Natural killer cell (primary cell): ENCODE measurements at regions of chr1 and their contacts with region 1.

Region 1: GRCh38 chr1:206766251-206766856 is 4.2 kb upstream of the IL19 start:
- DNase-seq: peak; percentile 66 to 88
- ATAC-seq: peak; percentile 71 to 79 (median 79)
- H3K4me3 ChIP-seq: no peak overlapping the region
- H3K4me3 Mint-ChIP-seq: peak overlapping the region; percentile 62
- H3K27ac ChIP-seq: no peak overlapping the region
- H3K27ac Mint-ChIP-seq: peak overlapping the region; percentile 29 to 90
- H3K4me1 ChIP-seq: peaks cover 58% of the 10 kb centered on the region
- H3K4me1 Mint-ChIP-seq: peaks cover 47 to 53% of the 10 kb centered on the region in 2 donors
- H3K27me3 ChIP-seq: peaks cover 6% of the 10 kb centered on the region
- H3K27me3 Mint-ChIP-seq: peaks cover 14% of the 10 kb centered on the region in 2 donors
- CTCF ChIP-seq: no peak

Region 2: GRCh38 chr1:206461602-206462455 is 304.5 kb before region 1 on chr1:
- intact Hi-C with region 1: no loop called
- DNase-seq: peak; percentile 54 to 85
- ATAC-seq: peak; percentile 85 to 97 (median 90)
- H3K4me3 ChIP-seq: no peak overlapping the region
- H3K4me3 Mint-ChIP-seq: no peak overlapping the region
- H3K27ac ChIP-seq: no peak overlapping the region
- H3K27ac Mint-ChIP-seq: peak overlapping the region in 1 of 2 donors; percentile 54
- H3K4me1 ChIP-seq: peaks cover 2% of the 10 kb centered on the region
- H3K4me1 Mint-ChIP-seq: peaks cover 0 to 5% of the 10 kb centered on the region in 2 donors
- H3K27me3 ChIP-seq: no peaks in the 10 kb centered on the region
- H3K27me3 Mint-ChIP-seq: peaks cover 0 to 6% of the 10 kb centered on the region in 2 donors
- CTCF ChIP-seq: peak; percentile 73

Region 3: GRCh38 chr1:206725109-206725963 is 41.0 kb before region 1 on chr1:
- intact Hi-C with region 1: loop called (anchors 5 kb)
- DNase-seq: peak; percentile 55 to 82
- ATAC-seq: peak; percentile 36 to 54 (median 54)
- H3K4me3 ChIP-seq: no peak overlapping the region
- H3K4me3 Mint-ChIP-seq: no peak overlapping the region
- H3K27ac ChIP-seq: no peak overlapping the region
- H3K27ac Mint-ChIP-seq: no peak overlapping the region
- H3K4me1 ChIP-seq: peaks cover 67% of the 10 kb centered on the region
- H3K4me1 Mint-ChIP-seq: peaks cover 63 to 83% of the 10 kb centered on the region in 2 donors
- H3K27me3 ChIP-seq: no peaks in the 10 kb centered on the region
- H3K27me3 Mint-ChIP-seq: no peaks in the 10 kb centered on the region
- CTCF ChIP-seq: peak; percentile 55

Region 4: GRCh38 chr1:206786212-206786886 is 20.0 kb after region 1 on chr1:
- intact Hi-C with region 1: loop called (anchors 1 kb)
- DNase-seq: peak; percentile 34 to 44
- ATAC-seq: peak; percentile 47 to 82 (median 65)
- H3K4me3 ChIP-seq: no peak overlapping the region
- H3K4me3 Mint-ChIP-seq: peak overlapping the region; percentile 36
- H3K27ac ChIP-seq: no peak overlapping the region
- H3K27ac Mint-ChIP-seq: no peak overlapping the region
- H3K4me1 ChIP-seq: peaks cover 44% of the 10 kb centered on the region
- H3K4me1 Mint-ChIP-seq: peaks cover 52 to 62% of the 10 kb centered on the region in 2 donors
- H3K27me3 ChIP-seq: peaks cover 3% of the 10 kb centered on the region
- H3K27me3 Mint-ChIP-seq: peaks cover 36 to 77% of the 10 kb centered on the region in 2 donors
- CTCF ChIP-seq: no peak

Region 5: DNA sequence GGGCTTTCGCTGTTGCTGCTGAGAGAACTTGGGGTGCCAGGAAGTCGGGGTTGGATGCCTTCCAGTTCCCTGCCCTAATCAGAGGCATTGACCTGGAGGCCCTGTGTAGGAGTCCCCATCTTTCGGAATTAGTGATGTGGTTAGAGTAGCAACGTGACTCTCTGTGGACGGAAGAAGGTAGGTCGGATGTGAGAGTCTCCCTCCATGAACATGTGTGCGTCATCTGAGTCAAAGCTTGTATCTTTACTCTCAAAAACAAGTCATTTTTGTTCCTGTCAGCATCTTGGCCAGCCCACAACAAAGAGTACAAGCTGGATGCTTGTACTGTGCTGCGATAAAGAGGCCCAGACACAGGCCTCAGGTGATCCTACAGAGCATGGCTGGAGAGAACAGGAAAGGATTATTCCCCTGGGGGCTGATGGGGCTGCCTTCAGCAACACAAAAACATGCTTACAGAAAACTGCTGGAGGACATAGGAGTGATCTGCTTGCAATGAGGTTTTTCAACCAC is 36.9 kb after region 1 on chr1:
- intact Hi-C with region 1: loop called (anchors 5 kb)
- DNase-seq: peak; percentile 20 to 96
- ATAC-seq: peak; percentile 88 to 89 (median 89)
- H3K4me3 ChIP-seq: no peak overlapping the region
- H3K4me3 Mint-ChIP-seq: no peak overlapping the region
- H3K27ac ChIP-seq: peak overlapping the region; percentile 61
- H3K27ac Mint-ChIP-seq: peak overlapping the region in 1 of 2 donors; percentile 76
- H3K4me1 ChIP-seq: peaks cover 18% of the 10 kb centered on the region
- H3K4me1 Mint-ChIP-seq: peaks cover 0 to 13% of the 10 kb centered on the region in 2 donors
- H3K27me3 ChIP-seq: no peaks in the 10 kb centered on the region
- H3K27me3 Mint-ChIP-seq: peaks cover 22 to 49% of the 10 kb centered on the region in 2 donors
- CTCF ChIP-seq: no peak